PC-3 (cell line): ENCODE measurements at regions of chr16 and their contacts with region 1.

Region 1: DNA sequence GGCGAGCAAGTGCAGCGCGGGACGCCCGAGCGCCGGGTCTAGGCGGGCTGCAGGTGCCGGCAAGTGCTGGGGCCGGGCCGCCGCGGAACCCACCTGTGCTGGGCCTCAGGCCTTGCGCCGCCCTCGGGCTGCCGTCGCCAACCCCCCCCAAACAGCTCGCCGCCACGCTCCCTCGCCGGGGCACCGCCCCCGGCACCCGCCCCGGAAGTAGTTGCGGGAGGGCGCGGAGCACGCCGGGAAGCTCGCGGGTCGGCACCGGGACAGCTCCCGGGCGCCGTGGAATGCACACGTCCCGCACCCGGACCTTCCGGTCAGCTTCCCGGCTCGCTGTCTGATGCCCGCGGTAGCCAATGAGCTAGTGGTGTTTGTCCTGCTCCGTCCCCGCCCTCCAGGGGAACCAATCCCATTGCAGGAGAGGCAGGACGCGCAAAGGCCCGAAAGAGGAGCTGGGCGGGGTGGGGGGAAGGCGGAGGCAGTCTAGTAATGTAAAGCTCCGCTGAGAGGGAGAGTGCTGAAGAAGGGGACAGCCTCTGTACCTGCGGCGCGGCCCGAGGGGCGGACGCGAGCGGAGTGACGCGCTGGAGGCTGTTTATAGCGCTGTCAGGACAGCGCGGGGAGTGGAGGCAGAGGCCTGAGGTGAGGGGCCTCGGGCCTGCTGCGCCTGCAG is at the starts of genes ANKS3 and DNAAF8:
- DNase-seq: peak; percentile 91
- ATAC-seq: peak; percentile 94
- H3K4me3 ChIP-seq: peak within 1 kb of the TSS; percentile 94
- H3K27ac ChIP-seq: peak within 1 kb of the TSS; percentile 76
- H3K4me1 ChIP-seq: no peaks in the 10 kb centered on the region; the same call in 1 of the 2 replicates
- H3K27me3 ChIP-seq: no peaks in the 10 kb centered on the region
- CTCF ChIP-seq: no peak
- total RNA-seq, gene ANKS3: 22.6 and 25.1 TPM in 2 replicates
- total RNA-seq, gene DNAAF8: 0.58 and 1.2 TPM in 2 replicates

Region 2: DNA sequence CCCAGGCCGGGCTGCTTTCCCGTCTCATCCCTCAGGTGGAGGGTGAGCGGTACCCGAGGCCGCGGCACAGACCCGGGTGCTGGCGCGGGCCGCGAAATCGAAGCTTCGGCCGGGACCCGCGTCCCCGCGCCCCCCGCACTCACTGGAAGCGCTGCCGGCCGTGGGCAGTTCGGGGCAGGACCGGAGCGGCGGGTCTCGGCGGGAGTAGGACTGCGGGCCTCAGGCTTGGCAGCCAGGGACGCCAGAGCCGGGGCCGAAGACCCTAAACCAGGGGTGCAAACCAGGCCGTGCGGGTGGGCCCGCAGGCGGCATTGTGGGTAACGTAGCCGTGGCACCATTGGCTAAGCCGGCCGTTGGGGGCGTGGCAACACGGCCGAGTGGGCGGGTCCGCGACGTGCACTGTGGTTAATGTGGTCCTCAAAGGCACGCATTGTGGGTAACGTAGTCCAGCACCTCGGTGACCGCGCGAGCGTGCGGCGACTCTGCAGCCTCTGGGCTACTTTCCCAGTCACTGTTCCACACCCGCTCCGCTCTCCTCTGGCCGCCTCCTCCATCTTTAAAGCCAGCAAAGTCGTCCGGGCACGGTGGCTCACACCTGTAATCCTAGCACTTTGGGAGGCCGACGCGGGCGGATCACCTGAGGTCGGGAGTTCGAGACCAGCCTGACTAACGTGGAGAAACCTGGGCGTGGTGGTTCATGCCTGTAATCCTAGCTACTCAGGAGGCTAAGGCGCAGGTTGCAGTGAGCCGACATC is 32.9 kb after region 1 on chr16 and contains the start of gene ZNF500:
- CTCF ChIA-PET with region 1: no interaction called
- POLR2A ChIA-PET with region 1: interaction called, 10 read pairs
- intact Hi-C with region 1: no loop called
- DNase-seq: peak; percentile 94
- ATAC-seq: peak; percentile 91
- H3K4me3 ChIP-seq: peak within 1 kb of the TSS; percentile 95
- H3K27ac ChIP-seq: no peak within 1 kb of the TSS; the same call in 1 of the 2 replicates
- H3K4me1 ChIP-seq: peaks cover 15% of the 10 kb centered on the region
- H3K27me3 ChIP-seq: no peaks in the 10 kb centered on the region
- CTCF ChIP-seq: no peak
- total RNA-seq, gene ZNF500: 8.6 and 10.4 TPM in 2 replicates

Region 3: GRCh38 chr16:4802659-4803287 is 68.6 kb after region 1 on chr16:
- CTCF ChIA-PET with region 1: no interaction called
- POLR2A ChIA-PET with region 1: interaction called, 5 read pairs
- intact Hi-C with region 1: loop called (anchors 5 kb)
- DNase-seq: peak; percentile 82
- ATAC-seq: peak; percentile 91
- H3K4me3 ChIP-seq: peak overlapping the region; percentile 84
- H3K27ac ChIP-seq: no peak overlapping the region; the same call in 1 of the 2 replicates
- H3K4me1 ChIP-seq: peaks cover 14% of the 10 kb centered on the region
- H3K27me3 ChIP-seq: no peaks in the 10 kb centered on the region
- CTCF ChIP-seq: no peak

Region 4: DNA sequence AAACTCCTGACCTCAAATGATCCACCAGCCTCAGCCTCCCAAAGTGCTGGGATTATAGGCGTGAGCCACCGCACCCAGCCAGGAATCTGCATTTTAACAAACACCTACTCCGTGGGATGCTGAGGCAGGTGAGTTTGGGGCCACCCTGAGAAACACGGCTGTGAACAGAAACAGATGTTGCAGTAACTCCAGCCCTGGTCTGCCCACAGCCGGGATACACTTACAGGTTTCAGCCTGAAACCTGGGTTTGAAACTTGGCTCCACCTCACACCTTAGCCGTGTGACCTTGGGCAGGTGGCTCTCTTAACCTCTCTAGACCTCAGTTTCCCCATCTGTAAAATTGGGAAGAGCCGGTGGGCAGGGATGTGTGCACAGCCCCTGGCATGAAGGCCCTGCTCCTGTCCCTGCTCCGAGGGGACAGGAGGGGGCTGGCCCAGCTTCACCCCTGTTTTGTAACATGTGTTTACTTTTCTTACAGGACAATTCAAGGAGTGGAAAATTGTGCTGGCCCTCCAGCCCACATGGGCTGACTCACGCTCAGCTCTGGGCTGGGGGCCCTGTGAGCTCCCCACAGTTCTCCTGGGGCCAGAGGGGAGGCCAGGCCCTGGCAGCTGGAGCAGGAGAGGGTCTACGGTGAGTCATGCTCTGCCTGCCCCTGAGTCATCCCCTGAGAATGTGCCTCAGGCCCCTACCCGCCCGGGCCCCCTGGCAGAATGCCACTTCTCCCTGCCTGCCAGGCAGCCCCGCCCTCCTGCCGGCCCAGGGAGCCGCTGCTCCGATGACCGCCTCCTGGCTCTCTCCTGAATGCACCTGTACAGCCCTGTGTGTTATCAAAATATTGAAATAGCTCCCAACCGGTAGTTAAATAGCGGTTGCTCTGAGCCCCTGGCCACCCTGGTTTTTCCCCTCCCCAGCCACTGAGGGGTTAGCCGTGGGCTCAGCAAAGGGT is 210.4 kb after region 1 on chr16:
- CTCF ChIA-PET with region 1: no interaction called
- POLR2A ChIA-PET with region 1: no interaction called
- intact Hi-C with region 1: loop called (anchors 10 kb)
- DNase-seq: peak; percentile 93
- ATAC-seq: peak; percentile 67
- H3K4me3 ChIP-seq: peak overlapping the region; percentile 38; the same call in 1 of the 2 replicates
- H3K27ac ChIP-seq: peak overlapping the region; percentile 92
- H3K4me1 ChIP-seq: peaks cover 37% of the 10 kb centered on the region
- H3K27me3 ChIP-seq: no peaks in the 10 kb centered on the region
- CTCF ChIP-seq: no peak